Psoas muscle (tissue), 8 donors: ENCODE measurements at regions of chr11 and their contacts with region 1.

Region 1: GRCh38 chr11:112655371-112655770 is 305.8 kb upstream of the NCAM1 start:
- DNase-seq: peak; percentile 77 to 91
- ATAC-seq: peak; percentile 21 to 52 (median 31)
- H3K4me3 ChIP-seq: no peak overlapping the region
- H3K27ac ChIP-seq: peak overlapping the region; percentile 14
- H3K4me1 ChIP-seq: peaks cover 66% of the 10 kb centered on the region
- H3K27me3 ChIP-seq: no peaks in the 10 kb centered on the region
- CTCF ChIP-seq: no peak

Region 2: GRCh38 chr11:112597286-112597790 is 58.0 kb before region 1 on chr11:
- intact Hi-C with region 1: no loop called
- DNase-seq: no peak
- ATAC-seq: no peak
- H3K4me3 ChIP-seq: no peak overlapping the region
- H3K27ac ChIP-seq: no peak overlapping the region
- H3K4me1 ChIP-seq: no peaks in the 10 kb centered on the region
- H3K27me3 ChIP-seq: no peaks in the 10 kb centered on the region
- CTCF ChIP-seq: no peak

Region 3: GRCh38 chr11:112613051-112613972 is 42.1 kb before region 1 on chr11:
- intact Hi-C with region 1: no loop called
- DNase-seq: no peak
- ATAC-seq: peak; percentile 47 to 65 (median 53)
- H3K4me3 ChIP-seq: no peak overlapping the region
- H3K27ac ChIP-seq: no peak overlapping the region
- H3K4me1 ChIP-seq: peaks cover 11% of the 10 kb centered on the region
- H3K27me3 ChIP-seq: no peaks in the 10 kb centered on the region
- CTCF ChIP-seq: no peak

Region 4: GRCh38 chr11:112751329-112751728 is 96.0 kb after region 1 on chr11:
- intact Hi-C with region 1: loop called in 1 of 2 experiments (anchors 5 kb)
- DNase-seq: no peak
- ATAC-seq: no peak
- H3K4me3 ChIP-seq: no peak overlapping the region
- H3K27ac ChIP-seq: no peak overlapping the region
- H3K4me1 ChIP-seq: no peaks in the 10 kb centered on the region
- H3K27me3 ChIP-seq: peaks cover 0 to 5% (median 3%) of the 10 kb centered on the region in 3 donors
- CTCF ChIP-seq: no peak

Region 5: DNA sequence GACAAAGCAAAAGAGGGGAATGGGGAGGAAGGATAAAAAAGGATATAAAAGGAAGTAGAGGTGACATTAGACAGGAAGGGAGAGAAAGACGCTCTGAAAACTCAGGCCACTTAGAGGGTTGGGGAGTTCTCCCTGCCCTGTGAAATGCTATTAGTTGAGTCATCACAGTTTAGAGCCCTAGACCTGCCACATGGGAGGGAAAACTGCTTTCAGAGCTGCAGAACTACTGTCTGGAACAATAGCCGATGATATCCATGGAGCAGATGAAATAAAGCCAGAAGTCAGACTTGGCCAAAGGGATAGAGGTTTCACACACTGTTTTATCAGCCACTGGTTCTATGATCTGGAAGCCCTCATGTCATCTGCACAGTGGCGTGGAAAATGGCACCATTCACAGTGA is 463.7 kb after region 1 on chr11:
- intact Hi-C with region 1: no loop called
- DNase-seq: no peak
- ATAC-seq: peak in 3 of 4 donors; percentile 27 to 38 (median 34)
- H3K4me3 ChIP-seq: no peak overlapping the region
- H3K27ac ChIP-seq: no peak overlapping the region
- H3K4me1 ChIP-seq: no peaks in the 10 kb centered on the region
- H3K27me3 ChIP-seq: no peaks in the 10 kb centered on the region
- CTCF ChIP-seq: no peak